ENCODE measurements at regions of chr10 and their contacts with region 1.

Region 1: DNA sequence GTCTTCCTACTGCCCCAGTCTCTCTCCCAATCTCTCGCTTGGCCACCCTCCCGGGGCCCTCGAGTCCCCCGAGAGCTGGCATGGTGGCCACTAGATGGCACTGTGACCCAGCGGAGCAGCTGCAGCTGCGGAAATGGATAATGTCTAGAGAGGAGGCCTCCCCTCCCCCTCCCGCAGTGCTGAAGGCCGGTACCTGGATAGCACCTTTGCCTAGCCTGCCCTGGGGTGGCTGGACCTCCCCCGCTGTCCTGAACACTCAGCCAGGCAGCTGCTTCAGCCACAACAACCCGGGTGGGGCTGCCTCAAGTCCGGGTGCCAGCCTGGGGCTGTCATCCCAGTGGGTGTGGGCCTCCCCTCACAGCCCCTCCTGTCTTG is 65.2 kb downstream of the GOLGA7B start:
- DNase-seq: peak; percentile 82
- CTCF ChIP-seq: peak; percentile 92

Region 2: GRCh38 chr10:98045785-98046389 is 131.1 kb after region 1 on chr10:
- in situ Hi-C with region 1: loop called (anchors 10 kb)
- DNase-seq: peak; percentile 76
- CTCF ChIP-seq: peak; percentile 95

Region 3: GRCh38 chr10:98309366-98310355 is 394.8 kb after region 1 on chr10:
- in situ Hi-C with region 1: loop called (anchors 25 kb)
- DNase-seq: peak; percentile 65
- CTCF ChIP-seq: peak; percentile 72